Sigmoid colon (tissue), 7 donors: ENCODE measurements at regions of chr11 and their contacts with region 1.

Region 1: GRCh38 chr11:73393479-73394380 is 17.5 kb downstream of the RELT start:
- DNase-seq: peak; percentile 83
- H3K4me3 ChIP-seq: no peak overlapping the region
- H3K27ac ChIP-seq: no peak overlapping the region
- H3K4me1 ChIP-seq: no peaks in the 10 kb centered on the region
- H3K27me3 ChIP-seq: no peaks in the 10 kb centered on the region
- CTCF ChIP-seq: peak; percentile 58 to 82 (median 80)
- EP300 ChIP-seq: no peak
- POLR2A ChIP-seq: no peak

Region 2: DNA sequence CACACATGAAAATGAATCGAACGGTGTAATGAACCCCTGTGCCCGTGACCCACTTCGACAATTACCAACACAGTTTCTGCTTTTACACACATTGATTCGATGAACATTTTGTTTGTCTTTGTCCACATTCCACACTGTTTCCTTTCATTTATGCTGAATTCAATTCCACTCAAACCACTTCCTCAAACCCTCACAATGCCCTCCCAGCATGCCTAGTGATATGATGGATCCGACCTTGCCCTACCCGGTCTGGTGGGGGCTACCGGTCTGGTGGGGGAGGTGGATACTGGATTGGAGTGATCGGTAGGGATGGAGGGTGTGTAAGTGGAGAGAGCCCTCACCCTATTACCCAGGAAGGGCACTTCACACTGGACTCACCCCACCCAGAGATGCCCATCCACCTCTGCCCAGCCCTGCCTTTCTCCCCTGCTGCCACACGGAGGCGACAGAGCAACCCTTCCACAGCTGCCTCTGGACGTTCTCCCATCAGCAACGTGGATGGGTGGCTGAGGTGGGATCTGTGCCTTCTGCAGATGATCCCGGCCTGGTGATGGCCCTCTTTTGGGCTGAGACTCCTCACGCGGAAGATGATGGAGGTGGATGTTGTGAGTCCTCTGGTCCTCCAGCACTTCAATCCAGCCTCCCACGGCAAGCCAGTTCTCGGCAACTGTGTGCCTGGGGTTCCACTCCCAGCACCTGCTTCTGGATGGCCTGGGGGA is 208.6 kb before region 1 on chr11:
- intact Hi-C with region 1: loop called (anchors 5 kb)
- DNase-seq: peak; percentile 71
- H3K4me3 ChIP-seq: no peak overlapping the region
- H3K27ac ChIP-seq: no peak overlapping the region
- H3K4me1 ChIP-seq: peaks cover 0 to 10% (median 5%) of the 10 kb centered on the region in 4 donors
- H3K27me3 ChIP-seq: no peaks in the 10 kb centered on the region
- CTCF ChIP-seq: peak; percentile 64 to 83 (median 79)
- EP300 ChIP-seq: no peak
- POLR2A ChIP-seq: no peak

Region 3: GRCh38 chr11:73295231-73295995 is 98.3 kb before region 1 on chr11:
- intact Hi-C with region 1: loop called (anchors 1 kb)
- DNase-seq: no peak
- H3K4me3 ChIP-seq: no peak overlapping the region
- H3K27ac ChIP-seq: no peak overlapping the region
- H3K4me1 ChIP-seq: peaks cover 0 to 7% (median 5%) of the 10 kb centered on the region in 4 donors
- H3K27me3 ChIP-seq: no peaks in the 10 kb centered on the region
- CTCF ChIP-seq: peak; percentile 57 to 87 (median 78)
- EP300 ChIP-seq: no peak
- POLR2A ChIP-seq: no peak

Region 4: GRCh38 chr11:73350908-73351636 is 42.7 kb before region 1 on chr11:
- intact Hi-C with region 1: loop called (anchors 1 kb)
- DNase-seq: peak; percentile 79
- H3K4me3 ChIP-seq: no peak overlapping the region
- H3K27ac ChIP-seq: peak overlapping the region in 3 of 4 donors; percentile 48 to 59 (median 55)
- H3K4me1 ChIP-seq: peaks cover 0 to 25% (median 9%) of the 10 kb centered on the region in 4 donors
- H3K27me3 ChIP-seq: no peaks in the 10 kb centered on the region
- CTCF ChIP-seq: peak; percentile 78 to 94 (median 86)
- EP300 ChIP-seq: no peak
- POLR2A ChIP-seq: no peak